Common myeloid progenitor, CD34-positive (primary cell): ENCODE measurements at regions of chr17 and their contacts with region 1.

Region 1: GRCh38 chr17:16363749-16364536 is 10.7 kb upstream of the CENPV start:
- DNase-seq: peak; percentile 71 to 89 (median 82)
- H3K4me3 ChIP-seq: no peak overlapping the region
- H3K27ac ChIP-seq: no peak overlapping the region
- H3K4me1 ChIP-seq: peaks cover 0 to 3% (median 0%) of the 10 kb centered on the region in 4 experiments
- H3K27me3 ChIP-seq: no peaks in the 10 kb centered on the region

Region 2: DNA sequence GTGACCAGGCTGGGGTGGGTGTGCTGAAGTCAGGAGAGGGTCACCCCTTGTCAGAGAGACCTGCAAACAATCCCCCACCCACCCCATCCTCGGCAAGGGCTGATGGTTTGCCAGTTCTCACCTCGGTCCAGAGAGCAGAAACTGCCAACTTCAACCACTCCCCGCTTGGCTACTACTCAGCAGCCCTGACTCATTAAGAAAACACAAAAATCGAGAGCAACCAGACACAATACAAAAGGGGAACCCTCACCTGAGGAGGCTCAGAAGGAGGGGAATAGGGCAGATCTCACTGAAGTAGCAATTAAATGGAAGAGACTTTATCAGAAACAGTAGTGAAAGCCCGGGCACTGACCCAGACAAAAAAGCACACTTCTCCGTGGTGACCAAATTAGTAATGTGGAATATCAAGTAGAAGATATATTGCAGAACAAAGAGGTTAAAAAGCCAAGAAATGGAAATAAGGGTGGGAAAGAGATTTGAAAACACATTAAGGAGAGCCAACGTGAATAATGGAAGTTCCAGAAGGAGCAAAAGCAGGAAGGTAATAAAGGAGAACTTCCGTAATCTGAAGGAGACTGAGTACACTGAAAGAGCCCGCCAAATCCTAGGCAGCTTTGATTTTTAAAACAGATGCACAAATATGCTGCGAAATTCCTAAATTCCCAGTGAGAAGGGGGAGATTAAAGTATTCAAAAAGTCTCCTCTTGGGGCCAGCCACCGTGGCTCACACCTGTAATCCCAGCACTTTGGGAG is 34.2 kb before region 1 on chr17:
- CTCF ChIA-PET with region 1: no interaction called
- POLR2A ChIA-PET with region 1: no interaction called
- DNase-seq: no peak
- H3K4me3 ChIP-seq: no peak overlapping the region
- H3K27ac ChIP-seq: no peak overlapping the region
- H3K4me1 ChIP-seq: no peaks in the 10 kb centered on the region
- H3K27me3 ChIP-seq: no peaks in the 10 kb centered on the region

Region 3: DNA sequence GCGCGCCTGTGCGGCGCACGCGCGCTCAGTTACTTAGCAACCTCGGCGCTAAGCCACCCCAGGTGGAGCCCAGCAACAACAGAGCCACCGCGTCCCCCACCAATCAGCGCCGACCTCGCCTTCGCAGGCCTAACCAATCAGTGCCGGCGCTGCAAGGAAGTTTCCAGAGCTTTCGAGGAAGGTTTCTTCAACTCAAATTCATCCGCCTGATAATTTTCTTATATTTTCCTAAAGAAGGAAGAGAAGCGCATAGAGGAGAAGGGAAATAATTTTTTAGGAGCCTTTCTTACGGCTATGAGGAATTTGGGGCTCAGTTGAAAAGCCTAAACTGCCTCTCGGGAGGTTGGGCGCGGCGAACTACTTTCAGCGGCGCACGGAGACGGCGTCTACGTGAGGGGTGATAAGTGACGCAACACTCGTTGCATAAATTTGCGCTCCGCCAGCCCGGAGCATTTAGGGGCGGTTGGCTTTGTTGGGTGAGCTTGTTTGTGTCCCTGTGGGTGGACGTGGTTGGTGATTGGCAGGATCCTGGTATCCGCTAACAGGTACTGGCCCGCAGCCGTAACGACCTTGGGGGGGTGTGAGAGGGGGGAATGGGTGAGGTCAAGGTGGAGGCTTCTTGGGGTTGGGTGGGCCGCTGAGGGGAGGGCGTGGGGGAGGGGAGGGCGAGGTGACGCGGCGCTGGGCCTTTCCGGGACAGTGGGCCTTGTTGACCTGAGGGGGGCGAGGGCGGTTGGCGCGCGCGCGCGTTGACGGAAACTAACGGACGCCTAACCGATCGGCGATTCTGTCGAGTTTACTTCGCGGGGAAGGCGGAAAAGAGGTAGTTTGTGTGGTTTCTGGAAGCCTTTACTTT is 16.9 kb after region 1 on chr17 and contains the start of gene UBB:
- CTCF ChIA-PET with region 1: interaction called, 66 read pairs
- POLR2A ChIA-PET with region 1: interaction called, 5 read pairs
- DNase-seq: peak; percentile 98 to 99 (median 99)
- H3K4me3 ChIP-seq: peak within 1 kb of the TSS; percentile 40 to 96 (median 86)
- H3K27ac ChIP-seq: peak within 1 kb of the TSS; percentile 99 to 100
- H3K4me1 ChIP-seq: peaks cover 6 to 38% (median 23%) of the 10 kb centered on the region in 4 experiments
- H3K27me3 ChIP-seq: no peaks in the 10 kb centered on the region

Region 4: DNA sequence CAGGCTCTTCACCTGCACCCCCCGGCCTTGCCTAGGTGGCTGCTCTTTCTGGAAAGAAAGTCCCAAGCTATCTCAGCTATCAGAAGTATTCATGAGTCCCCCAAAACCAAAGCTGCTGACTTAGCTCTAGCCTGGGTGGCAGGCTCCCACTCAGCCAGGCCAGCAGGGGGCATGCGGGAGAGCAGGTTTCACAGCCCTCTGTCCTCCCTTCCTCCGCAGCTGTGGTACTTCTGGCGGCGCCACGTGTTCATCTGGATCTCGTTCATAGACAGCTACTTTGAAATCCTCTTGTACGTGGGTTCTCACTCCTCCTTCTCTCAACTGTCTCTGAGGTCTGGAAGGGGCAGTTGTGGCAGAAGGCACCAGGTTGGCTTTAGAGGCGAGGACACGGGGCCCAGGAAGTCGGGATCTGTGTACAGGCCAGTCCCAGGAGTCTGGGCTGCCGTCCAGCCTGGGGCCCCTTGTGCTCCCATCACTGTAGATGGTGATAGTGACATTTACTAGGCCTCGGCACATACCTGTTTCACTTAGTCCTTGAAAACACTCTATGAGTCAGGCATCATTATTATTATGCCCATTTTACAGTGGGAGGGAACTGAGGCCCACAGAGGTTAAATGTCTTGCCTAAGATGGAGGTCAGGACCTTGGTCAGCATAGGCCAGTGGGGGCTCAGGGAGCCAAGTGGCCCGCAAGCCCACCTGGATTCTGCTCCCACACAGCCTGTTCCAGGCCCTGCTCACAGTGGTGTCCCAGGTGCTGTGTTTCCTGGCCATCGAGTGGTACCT is 64.3 kb after region 1 on chr17:
- CTCF ChIA-PET with region 1: interaction called, 15 read pairs
- POLR2A ChIA-PET with region 1: no interaction called
- DNase-seq: peak; percentile 41 to 67 (median 64)
- H3K4me3 ChIP-seq: no peak overlapping the region
- H3K27ac ChIP-seq: no peak overlapping the region
- H3K4me1 ChIP-seq: no peaks in the 10 kb centered on the region
- H3K27me3 ChIP-seq: no peaks in the 10 kb centered on the region

Region 5: GRCh38 chr17:16456742-16457316 is 92.9 kb after region 1 on chr17:
- CTCF ChIA-PET with region 1: interaction called, 10 read pairs
- POLR2A ChIA-PET with region 1: no interaction called
- DNase-seq: peak in 2 of 3 donors; percentile 15 to 27
- H3K4me3 ChIP-seq: no peak overlapping the region
- H3K27ac ChIP-seq: no peak overlapping the region
- H3K4me1 ChIP-seq: no peaks in the 10 kb centered on the region
- H3K27me3 ChIP-seq: no peaks in the 10 kb centered on the region

Region 6: DNA sequence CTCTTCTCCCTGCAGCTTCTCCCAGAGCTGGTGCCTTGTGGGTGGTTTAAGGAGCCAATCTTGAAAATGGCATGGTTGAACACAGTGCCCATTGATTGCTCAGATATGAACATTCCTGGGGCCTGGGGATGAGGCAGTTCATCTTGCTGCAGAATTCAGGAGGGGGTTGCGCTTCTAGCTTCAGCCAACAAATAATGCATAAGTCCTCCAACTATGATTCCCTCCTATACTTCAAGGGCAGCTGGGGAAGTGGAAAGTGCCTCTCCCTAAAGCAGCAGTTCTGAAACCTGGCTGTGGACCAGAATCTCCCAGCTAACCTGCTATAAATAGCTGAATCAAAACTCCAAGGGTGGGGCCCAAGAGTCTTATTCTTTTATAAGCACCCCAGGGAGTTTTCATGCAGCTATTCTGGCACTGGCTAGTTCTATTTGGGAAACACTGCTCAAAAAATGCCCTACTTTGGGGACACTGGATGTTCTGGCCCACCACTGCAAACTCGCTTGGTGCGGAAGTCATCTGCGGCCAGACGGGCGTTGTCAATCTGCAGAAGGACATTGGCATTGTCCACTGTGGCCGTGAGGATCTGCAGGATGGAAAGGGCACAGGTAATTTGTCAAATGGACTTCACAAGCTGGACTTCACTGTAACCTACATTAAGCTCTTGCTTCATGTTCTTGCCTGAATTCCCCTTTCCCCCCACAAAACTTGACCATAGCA is 456.4 kb after region 1 on chr17:
- CTCF ChIA-PET with region 1: no interaction called
- POLR2A ChIA-PET with region 1: no interaction called
- DNase-seq: no peak
- H3K4me3 ChIP-seq: no peak overlapping the region
- H3K27ac ChIP-seq: no peak overlapping the region
- H3K4me1 ChIP-seq: no peaks in the 10 kb centered on the region
- H3K27me3 ChIP-seq: peaks cover 0 to 19% (median 2%) of the 10 kb centered on the region in 5 experiments